Activated CD4-positive, alpha-beta T cell treated with anti-CD3 and anti-CD28 coated beads for 36 hours (primary cell): ENCODE measurements at regions of chr16 and their contacts with region 1.

Region 1: GRCh38 chr16:60027351-60027750 is 1293.2 kb upstream of the GOT2 start:
- DNase-seq: no peak
- ATAC-seq: no peak
- H3K4me3 Mint-ChIP-seq: no peak overlapping the region
- H3K27ac Mint-ChIP-seq: no peak overlapping the region
- H3K4me1 Mint-ChIP-seq: no peaks in the 10 kb centered on the region
- H3K27me3 Mint-ChIP-seq: no peaks in the 10 kb centered on the region

Region 2: GRCh38 chr16:60087530-60087929 is 60.2 kb after region 1 on chr16:
- CTCF ChIA-PET with region 1: no interaction called
- POLR2A ChIA-PET with region 1: no interaction called
- intact Hi-C with region 1: loop called in 1 of 2 experiments (anchors 10 kb)
- DNase-seq: no peak
- ATAC-seq: no peak
- H3K4me3 Mint-ChIP-seq: no peak overlapping the region
- H3K27ac Mint-ChIP-seq: no peak overlapping the region
- H3K4me1 Mint-ChIP-seq: no peaks in the 10 kb centered on the region
- H3K27me3 Mint-ChIP-seq: no peaks in the 10 kb centered on the region